CD8-positive, alpha-beta T cell (primary cell): ENCODE measurements at regions of chr10 and their contacts with region 1.

Region 1: GRCh38 chr10:77710759-77711682 is 73.4 kb upstream of the KCNMA1 start:
- DNase-seq: peak; percentile 43 to 82 (median 69)
- ATAC-seq: peak; percentile 97
- H3K4me3 ChIP-seq: peak overlapping the region in 1 of 2 experiments; percentile 40
- H3K4me3 Mint-ChIP-seq: peak overlapping the region; percentile 72
- H3K27ac ChIP-seq: no peak overlapping the region
- H3K27ac Mint-ChIP-seq: no peak overlapping the region
- H3K4me1 ChIP-seq: no peaks in the 10 kb centered on the region
- H3K4me1 Mint-ChIP-seq: peaks cover 6% of the 10 kb centered on the region
- H3K27me3 ChIP-seq: peaks cover 1 to 3% of the 10 kb centered on the region in 2 experiments
- H3K27me3 Mint-ChIP-seq: peaks cover 22% of the 10 kb centered on the region
- CTCF ChIP-seq: peak; percentile 93

Region 2: GRCh38 chr10:77165445-77166208 is 545.4 kb before region 1 on chr10:
- CTCF ChIA-PET with region 1: interaction called, 42 read pairs
- POLR2A ChIA-PET with region 1: no interaction called
- intact Hi-C with region 1: loop called (anchors 1 to 2 kb)
- DNase-seq: peak in 6 of 9 experiments; percentile 11 to 62 (median 39)
- ATAC-seq: peak; percentile 46
- H3K4me3 ChIP-seq: no peak overlapping the region
- H3K4me3 Mint-ChIP-seq: peak overlapping the region; percentile 52
- H3K27ac ChIP-seq: no peak overlapping the region
- H3K27ac Mint-ChIP-seq: no peak overlapping the region
- H3K4me1 ChIP-seq: no peaks in the 10 kb centered on the region
- H3K4me1 Mint-ChIP-seq: no peaks in the 10 kb centered on the region
- H3K27me3 ChIP-seq: peaks cover 2 to 3% of the 10 kb centered on the region in 2 experiments
- H3K27me3 Mint-ChIP-seq: peaks cover 18% of the 10 kb centered on the region
- CTCF ChIP-seq: peak; percentile 77

Region 3: DNA sequence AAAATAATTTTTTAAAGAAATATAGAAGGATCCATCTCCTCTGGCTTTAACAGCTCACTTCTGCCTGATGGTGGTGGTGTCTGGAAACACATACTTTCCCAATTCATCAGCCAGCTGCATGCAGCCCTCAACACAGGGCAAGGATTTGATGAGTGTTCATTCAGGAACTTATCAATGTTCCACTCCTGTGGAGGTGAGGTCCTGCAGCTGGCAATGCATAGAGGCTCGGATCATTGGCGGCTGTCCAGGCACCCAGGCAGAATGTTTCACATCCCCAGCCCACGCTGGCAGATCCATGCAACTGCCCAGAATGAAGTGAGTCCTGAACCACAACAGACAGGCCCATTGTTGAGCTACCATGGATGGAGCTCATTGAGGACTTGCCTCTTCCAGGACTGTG is 18.2 kb before region 1 on chr10:
- CTCF ChIA-PET with region 1: interaction called, 13 read pairs
- POLR2A ChIA-PET with region 1: no interaction called
- intact Hi-C with region 1: no loop called
- DNase-seq: peak in 1 of 9 experiments; percentile 41
- ATAC-seq: no peak
- H3K4me3 ChIP-seq: no peak overlapping the region
- H3K4me3 Mint-ChIP-seq: no peak overlapping the region
- H3K27ac ChIP-seq: no peak overlapping the region
- H3K27ac Mint-ChIP-seq: no peak overlapping the region
- H3K4me1 ChIP-seq: no peaks in the 10 kb centered on the region
- H3K4me1 Mint-ChIP-seq: no peaks in the 10 kb centered on the region
- H3K27me3 ChIP-seq: no peaks in the 10 kb centered on the region
- H3K27me3 Mint-ChIP-seq: peaks cover 20% of the 10 kb centered on the region
- CTCF ChIP-seq: no peak

Region 4: DNA sequence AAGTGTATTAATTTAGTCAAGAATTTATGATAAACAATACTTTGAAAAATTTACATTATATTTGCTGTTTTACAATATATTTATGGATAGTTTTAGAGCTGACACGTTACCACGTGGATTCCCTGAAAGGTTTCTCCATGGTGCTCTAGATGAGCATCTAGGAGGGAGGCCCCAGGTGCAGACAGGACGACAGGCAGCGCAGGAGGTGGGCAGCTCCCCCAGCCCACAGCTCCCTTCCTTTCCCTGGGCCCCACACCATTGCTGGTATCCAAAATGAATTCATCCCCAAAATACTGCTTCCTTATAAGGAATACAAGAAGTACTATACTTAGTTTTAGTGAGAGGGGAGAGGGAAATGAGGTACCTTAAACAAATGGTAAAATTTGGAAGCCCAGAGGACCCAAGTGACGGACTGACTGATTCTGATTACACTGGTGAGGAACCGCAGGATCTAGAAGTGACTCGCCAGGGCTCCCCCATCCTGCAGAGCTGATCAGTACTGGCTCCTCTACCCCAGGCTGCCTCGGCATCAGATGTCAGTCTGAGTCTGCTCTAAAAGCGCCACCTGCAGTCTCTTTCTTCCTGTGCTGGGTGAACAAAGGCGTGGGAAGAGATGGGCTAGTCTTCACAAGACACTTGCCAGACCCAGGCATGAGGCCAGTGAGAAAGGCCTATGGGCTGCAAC is 126.4 kb after region 1 on chr10:
- CTCF ChIA-PET with region 1: interaction called, 53 read pairs
- POLR2A ChIA-PET with region 1: no interaction called
- intact Hi-C with region 1: loop called (anchors 1 kb)
- DNase-seq: peak; percentile 30 to 85 (median 62)
- ATAC-seq: peak; percentile 55
- H3K4me3 ChIP-seq: no peak overlapping the region
- H3K4me3 Mint-ChIP-seq: no peak overlapping the region
- H3K27ac ChIP-seq: peak overlapping the region in 1 of 2 experiments; percentile 87
- H3K27ac Mint-ChIP-seq: peak overlapping the region; percentile 84
- H3K4me1 ChIP-seq: peaks cover 10% of the 10 kb centered on the region
- H3K4me1 Mint-ChIP-seq: peaks cover 20% of the 10 kb centered on the region
- H3K27me3 ChIP-seq: no peaks in the 10 kb centered on the region
- H3K27me3 Mint-ChIP-seq: no peaks in the 10 kb centered on the region
- CTCF ChIP-seq: no peak

Region 5: GRCh38 chr10:78109210-78109609 is 398.2 kb after region 1 on chr10:
- CTCF ChIA-PET with region 1: no interaction called
- POLR2A ChIA-PET with region 1: no interaction called
- intact Hi-C with region 1: no loop called
- DNase-seq: no peak
- ATAC-seq: no peak
- H3K4me3 ChIP-seq: no peak overlapping the region
- H3K4me3 Mint-ChIP-seq: no peak overlapping the region
- H3K27ac ChIP-seq: no peak overlapping the region
- H3K27ac Mint-ChIP-seq: no peak overlapping the region
- H3K4me1 ChIP-seq: no peaks in the 10 kb centered on the region
- H3K4me1 Mint-ChIP-seq: no peaks in the 10 kb centered on the region
- H3K27me3 ChIP-seq: no peaks in the 10 kb centered on the region
- H3K27me3 Mint-ChIP-seq: peaks cover 4% of the 10 kb centered on the region
- CTCF ChIP-seq: no peak

Region 6: DNA sequence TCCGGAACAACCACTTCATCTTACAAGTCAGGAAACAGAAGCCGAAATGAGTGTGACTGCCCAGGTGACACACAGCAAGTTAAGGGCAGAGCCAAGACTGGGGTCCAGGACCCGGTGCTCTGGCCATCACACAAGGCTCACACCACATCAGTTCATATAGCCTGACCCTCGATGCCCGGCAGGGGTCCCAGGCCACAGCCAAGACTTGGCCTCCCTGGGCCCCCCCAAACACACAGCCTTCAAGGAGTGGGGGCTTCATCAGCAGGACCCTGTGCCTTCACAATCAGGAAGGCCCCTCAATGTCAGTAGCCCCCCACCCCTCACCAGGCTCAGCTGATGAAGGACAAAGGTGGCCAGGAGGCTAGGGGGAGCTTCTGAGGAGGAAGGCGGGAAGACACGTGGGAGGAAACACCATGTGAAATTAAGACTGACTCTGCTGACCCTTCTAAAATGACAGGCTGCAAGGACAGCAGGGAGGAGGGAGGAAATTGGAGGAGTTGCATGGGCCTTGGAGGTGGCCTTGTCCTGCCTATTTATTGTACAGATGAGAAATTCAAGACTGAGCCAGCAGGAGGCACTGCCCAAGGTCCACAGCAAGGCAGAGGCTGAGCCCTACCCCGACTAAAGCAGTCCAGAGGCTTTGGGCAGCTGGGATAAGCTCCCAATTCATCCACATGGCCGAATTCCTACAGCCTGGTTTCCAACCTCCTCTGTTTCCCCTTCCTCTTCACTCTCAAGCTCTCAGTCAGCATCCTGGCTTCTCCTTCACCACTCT is 1141.6 kb after region 1 on chr10:
- CTCF ChIA-PET with region 1: no interaction called
- POLR2A ChIA-PET with region 1: no interaction called
- intact Hi-C with region 1: no loop called
- DNase-seq: peak in 3 of 9 experiments; percentile 26 to 42 (median 32)
- ATAC-seq: no peak
- H3K4me3 ChIP-seq: no peak overlapping the region
- H3K4me3 Mint-ChIP-seq: no peak overlapping the region
- H3K27ac ChIP-seq: no peak overlapping the region
- H3K27ac Mint-ChIP-seq: no peak overlapping the region
- H3K4me1 ChIP-seq: no peaks in the 10 kb centered on the region
- H3K4me1 Mint-ChIP-seq: no peaks in the 10 kb centered on the region
- H3K27me3 ChIP-seq: no peaks in the 10 kb centered on the region
- H3K27me3 Mint-ChIP-seq: no peaks in the 10 kb centered on the region
- CTCF ChIP-seq: peak; percentile 19